K562 (cell line): ENCODE measurements at regions of chr12 and their contacts with region 1.

Region 1: GRCh38 chr12:74365178-74365964 is 172.3 kb upstream of the ATXN7L3B start:
- DNase-seq: peak; percentile 35 to 61 (median 38)
- ATAC-seq: peak; percentile 95
- H3K4me3 ChIP-seq: no peak overlapping the region
- H3K27ac ChIP-seq: no peak overlapping the region
- H3K4me1 ChIP-seq: no peaks in the 10 kb centered on the region
- H3K27me3 ChIP-seq: no peaks in the 10 kb centered on the region
- CTCF ChIP-seq: peak; percentile 65 to 73 (median 67)
- EP300 ChIP-seq: no peak
- POLR2A ChIP-seq: no peak
- RAD21 ChIP-seq: peak; percentile 62 to 76

Region 2: GRCh38 chr12:74021937-74022336 is 343.4 kb before region 1 on chr12:
- CTCF ChIA-PET with region 1: no interaction called
- POLR2A ChIA-PET with region 1: no interaction called
- in situ Hi-C with region 1: no loop called
- intact Hi-C with region 1: loop called (anchors 1 kb)
- DNase-seq: peak; percentile 39 to 74 (median 46)
- ATAC-seq: peak; percentile 100
- H3K4me3 ChIP-seq: no peak overlapping the region
- H3K27ac ChIP-seq: peak overlapping the region; percentile 61; the same call in 2 of the 3 replicates
- H3K4me1 ChIP-seq: peaks cover 0 to 5% of the 10 kb centered on the region in 2 experiments; a peak in 2 of 5 replicates
- H3K27me3 ChIP-seq: no peaks in the 10 kb centered on the region
- CTCF ChIP-seq: peak; percentile 66 to 85 (median 73)
- EP300 ChIP-seq: peak; percentile 77
- POLR2A ChIP-seq: no peak
- RAD21 ChIP-seq: peak; percentile 66 to 74

Region 3: DNA sequence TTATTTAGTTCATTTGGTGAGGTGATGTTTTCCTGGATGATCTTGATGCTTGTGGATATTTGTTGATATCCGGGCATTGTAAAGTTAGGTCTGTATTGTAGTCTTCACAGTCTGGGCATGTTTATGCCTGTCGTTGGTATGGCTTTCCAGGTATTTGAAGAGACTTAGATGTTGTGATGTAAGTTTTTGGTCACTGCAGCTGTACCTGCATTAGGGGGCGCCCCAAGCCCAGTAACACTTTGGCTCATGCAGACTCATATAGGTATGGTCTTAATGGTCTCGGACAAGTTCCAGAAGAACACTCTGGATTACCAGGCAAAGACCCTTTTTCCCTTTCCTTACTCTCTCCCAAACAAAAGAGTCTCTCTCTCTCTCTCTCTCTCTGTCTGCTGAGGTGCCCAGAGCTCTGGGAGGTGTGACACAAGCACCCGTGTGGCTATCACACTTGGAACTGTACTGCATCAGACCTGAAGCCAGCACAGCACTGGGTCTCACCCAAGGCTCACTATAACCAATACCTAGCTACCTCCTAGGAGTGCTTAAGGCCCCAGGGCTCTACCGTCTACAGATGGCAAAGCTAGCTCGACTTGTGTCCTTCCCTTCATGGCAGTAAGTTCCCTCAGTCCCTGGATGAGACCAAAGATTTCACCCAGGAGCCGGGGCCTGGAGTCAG is 253.5 kb before region 1 on chr12:
- CTCF ChIA-PET with region 1: no interaction called
- POLR2A ChIA-PET with region 1: no interaction called
- in situ Hi-C with region 1: no loop called
- intact Hi-C with region 1: loop called (anchors 1 kb)
- DNase-seq: peak in 2 of 4 experiments; percentile 7 to 67
- ATAC-seq: peak; percentile 96
- H3K4me3 ChIP-seq: no peak overlapping the region
- H3K27ac ChIP-seq: no peak overlapping the region
- H3K4me1 ChIP-seq: no peaks in the 10 kb centered on the region
- H3K27me3 ChIP-seq: no peaks in the 10 kb centered on the region
- CTCF ChIP-seq: peak; percentile 68 to 80 (median 71)
- EP300 ChIP-seq: no peak
- POLR2A ChIP-seq: no peak
- RAD21 ChIP-seq: peak; percentile 62 to 84

Region 4: GRCh38 chr12:74250891-74251290 is 114.5 kb before region 1 on chr12:
- CTCF ChIA-PET with region 1: no interaction called
- POLR2A ChIA-PET with region 1: no interaction called
- in situ Hi-C with region 1: no loop called
- intact Hi-C with region 1: no loop called
- DNase-seq: no peak
- ATAC-seq: no peak
- H3K4me3 ChIP-seq: no peak overlapping the region
- H3K27ac ChIP-seq: no peak overlapping the region
- H3K4me1 ChIP-seq: no peaks in the 10 kb centered on the region
- H3K27me3 ChIP-seq: no peaks in the 10 kb centered on the region
- CTCF ChIP-seq: no peak
- EP300 ChIP-seq: no peak
- POLR2A ChIP-seq: no peak
- RAD21 ChIP-seq: no peak

Region 5: DNA sequence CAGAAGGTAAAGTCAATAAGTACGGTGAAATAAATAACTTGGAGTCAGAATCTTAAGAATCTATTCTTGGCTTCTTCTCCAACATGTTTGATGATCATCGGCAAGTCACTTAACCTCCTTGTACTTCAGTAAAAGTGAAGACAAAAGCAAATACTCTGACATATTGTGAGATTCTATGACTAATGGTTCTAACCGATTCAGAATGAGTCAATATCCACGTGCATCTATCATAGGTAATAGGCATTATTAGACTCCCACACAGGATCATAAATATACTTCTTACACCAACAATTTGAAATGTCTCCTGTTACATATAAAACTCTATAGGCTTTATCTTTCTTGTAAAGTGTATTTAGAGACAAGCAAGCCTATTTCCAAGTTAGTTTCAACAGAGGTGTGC is 27.9 kb after region 1 on chr12:
- CTCF ChIA-PET with region 1: no interaction called
- POLR2A ChIA-PET with region 1: no interaction called
- in situ Hi-C with region 1: no loop called
- intact Hi-C with region 1: no loop called
- DNase-seq: no peak
- ATAC-seq: no peak
- H3K4me3 ChIP-seq: no peak overlapping the region
- H3K27ac ChIP-seq: no peak overlapping the region
- H3K4me1 ChIP-seq: no peaks in the 10 kb centered on the region
- H3K27me3 ChIP-seq: no peaks in the 10 kb centered on the region
- CTCF ChIP-seq: no peak
- EP300 ChIP-seq: no peak
- POLR2A ChIP-seq: no peak
- RAD21 ChIP-seq: no peak

Region 6: GRCh38 chr12:74412606-74413230 is 47.3 kb after region 1 on chr12:
- CTCF ChIA-PET with region 1: no interaction called
- POLR2A ChIA-PET with region 1: no interaction called
- in situ Hi-C with region 1: no loop called
- intact Hi-C with region 1: no loop called
- DNase-seq: peak; percentile 6 to 30 (median 16)
- ATAC-seq: no peak
- H3K4me3 ChIP-seq: no peak overlapping the region
- H3K27ac ChIP-seq: no peak overlapping the region
- H3K4me1 ChIP-seq: no peaks in the 10 kb centered on the region
- H3K27me3 ChIP-seq: no peaks in the 10 kb centered on the region
- CTCF ChIP-seq: peak; percentile 15 to 54 (median 18); a peak in 3 of 6 replicates
- EP300 ChIP-seq: no peak
- POLR2A ChIP-seq: no peak
- RAD21 ChIP-seq: peak; percentile 55 to 62

Region 7: DNA sequence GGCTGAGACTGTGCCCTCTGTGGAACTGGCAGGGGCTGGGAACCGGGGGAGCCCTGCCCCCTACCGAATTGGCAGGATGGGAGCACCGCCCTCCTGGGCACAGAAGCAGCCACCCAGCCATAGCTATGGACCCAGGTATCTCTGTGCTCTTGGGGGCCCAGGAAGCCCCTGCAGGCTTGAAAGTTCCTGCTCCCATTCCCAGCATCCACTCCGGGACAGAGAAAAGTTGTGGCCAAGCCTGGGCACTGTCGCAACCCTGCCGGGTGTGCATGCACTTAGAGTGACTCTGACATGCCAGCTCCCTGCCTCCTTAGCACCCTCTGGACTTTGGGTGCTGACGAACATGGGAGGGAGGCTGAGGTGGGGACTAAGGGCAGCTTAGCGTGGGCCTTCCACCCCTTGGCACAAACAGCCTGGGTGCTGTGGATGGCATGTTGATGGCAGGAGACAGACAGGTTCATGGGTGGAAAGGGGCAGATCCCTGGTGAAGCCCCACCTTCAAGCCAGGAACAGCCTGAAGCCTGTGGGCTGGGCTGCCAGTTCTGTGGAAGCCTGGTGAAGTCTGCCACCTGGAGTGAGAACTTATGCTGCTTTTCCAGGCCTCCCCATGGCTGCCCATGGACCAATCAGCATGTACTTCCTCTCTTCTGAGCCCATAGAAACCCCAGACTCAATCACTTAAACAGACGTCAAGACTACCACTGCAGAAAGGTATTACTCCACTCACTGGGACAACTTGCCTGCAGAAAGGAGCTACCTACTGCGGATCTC is 451.2 kb after region 1 on chr12:
- CTCF ChIA-PET with region 1: no interaction called
- POLR2A ChIA-PET with region 1: no interaction called
- in situ Hi-C with region 1: no loop called
- intact Hi-C with region 1: no loop called
- DNase-seq: no peak
- ATAC-seq: no peak
- H3K4me3 ChIP-seq: no peak overlapping the region
- H3K27ac ChIP-seq: no peak overlapping the region
- H3K4me1 ChIP-seq: no peaks in the 10 kb centered on the region
- H3K27me3 ChIP-seq: no peaks in the 10 kb centered on the region
- CTCF ChIP-seq: no peak
- EP300 ChIP-seq: no peak
- POLR2A ChIP-seq: no peak
- RAD21 ChIP-seq: no peak